Activated B cell treated with CpG ODN at 0.5 μM for 24 hours (primary cell): ENCODE measurements at regions of chr6 and their contacts with region 1.

Region 1: GRCh38 chr6:7933794-7934193 is 23.2 kb upstream of the TXNDC5 start:
- DNase-seq: no peak
- ATAC-seq: peak; percentile 98
- H3K4me3 Mint-ChIP-seq: no peak overlapping the region
- H3K27ac Mint-ChIP-seq: peak overlapping the region; percentile 46
- H3K4me1 Mint-ChIP-seq: peaks cover 34% of the 10 kb centered on the region
- H3K27me3 Mint-ChIP-seq: no peaks in the 10 kb centered on the region
- CTCF ChIP-seq: no peak

Region 2: GRCh38 chr6:7899101-7899888 is 34.5 kb before region 1 on chr6:
- CTCF ChIA-PET with region 1: interaction called, 6 read pairs
- POLR2A ChIA-PET with region 1: interaction called, 3 read pairs
- intact Hi-C with region 1: loop called (anchors 2 kb)
- DNase-seq: no peak
- ATAC-seq: peak; percentile 61
- H3K4me3 Mint-ChIP-seq: no peak overlapping the region
- H3K27ac Mint-ChIP-seq: no peak overlapping the region
- H3K4me1 Mint-ChIP-seq: peaks cover 32% of the 10 kb centered on the region
- H3K27me3 Mint-ChIP-seq: no peaks in the 10 kb centered on the region
- CTCF ChIP-seq: no peak

Region 3: DNA sequence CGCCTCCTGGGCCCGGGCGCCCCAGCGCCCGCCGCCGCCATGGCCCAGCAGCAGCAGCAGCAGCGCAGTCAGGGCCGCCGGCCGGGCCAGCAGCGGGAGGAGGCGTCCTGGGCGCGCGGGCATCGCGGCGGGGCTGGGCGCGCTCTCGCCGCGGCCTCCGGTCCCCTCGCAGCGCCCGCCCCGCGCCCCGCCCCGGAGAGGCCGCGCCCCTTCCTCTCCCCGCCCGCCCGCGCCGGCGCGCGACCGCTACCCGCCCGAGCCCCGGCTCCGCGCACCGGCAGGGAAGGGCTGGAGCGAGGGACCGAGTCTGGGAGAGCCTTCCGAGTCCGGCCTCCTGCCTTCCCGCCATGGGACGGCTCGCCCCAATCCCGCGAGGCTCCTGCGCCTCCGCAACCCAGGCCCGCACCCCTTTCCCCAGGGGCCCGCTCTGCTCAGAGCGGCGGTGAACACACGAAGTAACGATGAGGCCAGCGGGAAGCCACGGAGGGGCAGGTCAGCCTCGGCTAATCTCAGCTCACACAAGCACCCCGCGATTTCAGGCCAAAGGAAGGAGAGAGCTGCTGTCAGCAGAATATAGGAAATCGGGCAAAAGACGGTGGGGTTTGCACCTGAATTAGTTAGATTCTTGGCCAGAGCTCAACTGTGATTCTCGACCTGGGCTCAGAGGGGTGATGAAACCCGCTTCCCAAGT is 23.0 kb before region 1 on chr6 and contains the start of gene TXNDC5:
- CTCF ChIA-PET with region 1: interaction called, 3 read pairs
- POLR2A ChIA-PET with region 1: interaction called, 9 read pairs
- intact Hi-C with region 1: loop called (anchors 1 kb)
- DNase-seq: peak; percentile 78
- ATAC-seq: peak; percentile 79
- H3K4me3 Mint-ChIP-seq: peak within 1 kb of the TSS; percentile 85
- H3K27ac Mint-ChIP-seq: peak within 1 kb of the TSS; percentile 83
- H3K4me1 Mint-ChIP-seq: peaks cover 26% of the 10 kb centered on the region
- H3K27me3 Mint-ChIP-seq: no peaks in the 10 kb centered on the region
- CTCF ChIP-seq: no peak
- total RNA-seq, gene TXNDC5: 68.2 TPM in 2 replicates

Region 4: DNA sequence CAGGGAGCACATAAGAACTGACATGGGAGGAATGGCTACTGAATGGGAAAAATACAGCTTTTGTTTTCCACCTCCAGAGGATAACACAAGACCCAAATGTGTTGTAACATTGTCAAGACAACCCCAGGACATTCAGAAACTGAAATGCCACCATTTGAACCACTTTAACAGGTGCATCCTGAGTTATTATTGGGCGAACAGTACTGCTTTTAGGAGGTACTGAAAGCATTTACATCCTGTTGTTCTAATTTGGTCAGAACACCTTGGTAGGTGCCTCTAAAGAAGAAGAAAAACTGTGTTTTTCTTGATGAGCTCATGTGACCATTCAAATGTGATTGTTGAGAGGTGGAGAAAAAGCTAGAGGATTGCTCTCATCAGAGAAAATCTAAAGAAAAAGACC is 16.8 kb before region 1 on chr6:
- CTCF ChIA-PET with region 1: interaction called, 4 read pairs
- POLR2A ChIA-PET with region 1: interaction called, 10 read pairs
- intact Hi-C with region 1: loop called (anchors 1 kb)
- DNase-seq: no peak
- ATAC-seq: peak; percentile 36
- H3K4me3 Mint-ChIP-seq: no peak overlapping the region
- H3K27ac Mint-ChIP-seq: no peak overlapping the region
- H3K4me1 Mint-ChIP-seq: no peaks in the 10 kb centered on the region
- H3K27me3 Mint-ChIP-seq: no peaks in the 10 kb centered on the region
- CTCF ChIP-seq: no peak

Region 5: DNA sequence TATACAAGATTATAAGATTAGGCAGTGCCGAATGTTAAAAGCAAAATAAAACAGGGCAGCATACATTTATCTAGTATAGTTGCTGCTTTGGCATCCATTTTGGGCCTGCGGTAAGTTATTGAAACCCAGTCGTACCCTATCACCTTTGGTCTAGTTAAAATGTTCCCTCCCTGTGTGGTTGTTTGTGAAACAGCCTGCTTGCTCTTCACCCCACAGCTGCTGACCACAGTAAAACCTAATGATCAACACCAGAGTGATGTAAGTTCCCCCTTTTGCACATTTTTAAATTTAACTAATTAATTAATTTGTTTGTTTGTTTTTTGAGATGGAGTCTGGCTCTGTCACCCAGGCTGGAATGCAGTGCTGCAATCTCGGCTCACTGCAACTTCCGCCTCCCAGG is 27.1 kb after region 1 on chr6:
- CTCF ChIA-PET with region 1: no interaction called
- POLR2A ChIA-PET with region 1: interaction called, 4 read pairs
- intact Hi-C with region 1: loop called (anchors 1 kb)
- DNase-seq: no peak
- ATAC-seq: peak; percentile 35
- H3K4me3 Mint-ChIP-seq: no peak overlapping the region
- H3K27ac Mint-ChIP-seq: peak overlapping the region; percentile 64
- H3K4me1 Mint-ChIP-seq: peaks cover 23% of the 10 kb centered on the region
- H3K27me3 Mint-ChIP-seq: no peaks in the 10 kb centered on the region
- CTCF ChIP-seq: no peak